A673 (cell line): ENCODE measurements at regions of chr1 and their contacts with region 1.

Region 1: DNA sequence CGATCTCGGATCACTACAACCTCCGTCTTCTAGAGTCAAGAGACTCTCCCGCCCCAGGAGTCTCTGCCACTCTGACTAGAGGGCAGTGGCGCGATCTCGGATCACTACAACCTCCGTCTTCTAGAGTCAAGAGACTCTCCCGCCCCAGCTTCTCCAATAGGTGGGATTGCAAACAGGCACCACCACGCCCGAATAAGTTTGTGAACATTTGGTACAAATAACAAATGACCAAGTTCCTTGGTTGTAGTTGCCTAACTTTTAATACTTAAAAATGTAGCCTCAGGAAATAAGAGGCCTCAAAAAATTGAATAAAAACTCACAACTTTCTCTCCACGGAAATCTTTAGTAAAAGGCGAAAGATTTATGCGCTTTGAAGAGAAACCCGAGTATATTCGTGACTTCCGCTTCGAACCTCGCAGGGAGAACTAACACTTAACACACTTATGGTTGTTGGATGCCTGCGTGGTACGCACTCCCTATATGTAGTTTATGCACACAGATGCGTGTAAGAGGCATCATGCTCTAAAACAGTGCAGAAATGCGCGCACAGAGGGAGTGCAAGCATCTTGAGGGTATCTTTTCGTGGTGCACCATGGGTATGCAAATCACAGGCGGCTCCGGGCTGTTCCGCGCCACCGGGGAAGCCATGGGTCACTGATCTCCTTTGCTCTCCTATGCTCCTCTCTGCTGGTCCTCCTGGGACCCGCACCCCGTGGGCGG is 11.4 kb downstream of the BTBD19 start:
- DNase-seq: peak; percentile 98
- H3K4me3 ChIP-seq: peak overlapping the region; percentile 48
- H3K27ac ChIP-seq: peak overlapping the region; percentile 98
- H3K4me1 ChIP-seq: peaks cover 6% of the 10 kb centered on the region
- H3K27me3 ChIP-seq: no peaks in the 10 kb centered on the region
- CTCF ChIP-seq: 0 out of 2 replicates have a peak, but pooled peaks have one; percentile 15

Region 2: DNA sequence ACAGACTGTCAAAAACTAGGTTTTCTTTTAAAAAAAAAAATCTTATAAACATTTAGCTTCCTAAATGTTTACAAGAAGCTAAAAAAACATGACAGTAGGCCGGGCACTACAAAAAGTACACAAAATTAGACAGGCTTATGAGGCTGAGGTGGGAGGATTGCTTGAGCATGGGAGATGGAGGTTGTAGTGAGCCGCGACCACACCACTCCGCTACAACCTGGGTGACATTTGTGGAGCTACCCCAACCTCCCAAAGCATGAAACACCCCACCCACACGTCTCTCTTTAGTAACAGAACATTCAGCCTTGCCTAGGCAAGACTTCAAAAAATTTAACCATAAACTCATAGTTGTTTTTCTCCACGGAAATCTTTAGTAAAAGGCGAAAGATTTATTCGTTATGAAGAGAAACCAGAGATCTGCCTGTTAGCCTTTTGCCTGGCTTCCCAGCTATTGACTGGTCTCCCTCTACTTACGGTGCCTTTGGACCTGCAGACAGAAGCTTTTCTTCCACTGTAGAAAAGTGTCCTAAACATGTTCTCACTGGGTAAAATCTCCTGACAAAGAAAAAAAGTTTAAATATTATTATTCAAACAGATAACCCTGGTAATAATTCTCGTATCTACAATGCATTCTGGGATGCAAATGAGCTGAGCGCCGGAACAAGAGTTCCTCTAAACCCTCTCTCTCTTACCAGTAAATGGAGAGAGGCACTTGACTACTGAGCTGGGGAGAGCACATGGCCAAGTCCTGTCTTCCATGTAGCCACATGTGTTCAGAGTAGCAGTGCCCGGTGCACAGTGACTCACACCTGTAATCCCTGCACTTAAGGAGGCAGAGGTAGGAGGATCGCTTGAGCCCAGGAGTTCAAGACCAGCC is 98.0 kb before region 1 on chr1:
- CTCF ChIA-PET with region 1: no interaction called
- POLR2A ChIA-PET with region 1: interaction called, 18 read pairs
- intact Hi-C with region 1: no loop called
- DNase-seq: peak; percentile 98
- H3K4me3 ChIP-seq: no peak overlapping the region
- H3K27ac ChIP-seq: peak overlapping the region; percentile 95
- H3K4me1 ChIP-seq: peaks cover 3% of the 10 kb centered on the region
- H3K27me3 ChIP-seq: no peaks in the 10 kb centered on the region
- CTCF ChIP-seq: no peak; the same call in 1 of the 2 replicates

Region 3: DNA sequence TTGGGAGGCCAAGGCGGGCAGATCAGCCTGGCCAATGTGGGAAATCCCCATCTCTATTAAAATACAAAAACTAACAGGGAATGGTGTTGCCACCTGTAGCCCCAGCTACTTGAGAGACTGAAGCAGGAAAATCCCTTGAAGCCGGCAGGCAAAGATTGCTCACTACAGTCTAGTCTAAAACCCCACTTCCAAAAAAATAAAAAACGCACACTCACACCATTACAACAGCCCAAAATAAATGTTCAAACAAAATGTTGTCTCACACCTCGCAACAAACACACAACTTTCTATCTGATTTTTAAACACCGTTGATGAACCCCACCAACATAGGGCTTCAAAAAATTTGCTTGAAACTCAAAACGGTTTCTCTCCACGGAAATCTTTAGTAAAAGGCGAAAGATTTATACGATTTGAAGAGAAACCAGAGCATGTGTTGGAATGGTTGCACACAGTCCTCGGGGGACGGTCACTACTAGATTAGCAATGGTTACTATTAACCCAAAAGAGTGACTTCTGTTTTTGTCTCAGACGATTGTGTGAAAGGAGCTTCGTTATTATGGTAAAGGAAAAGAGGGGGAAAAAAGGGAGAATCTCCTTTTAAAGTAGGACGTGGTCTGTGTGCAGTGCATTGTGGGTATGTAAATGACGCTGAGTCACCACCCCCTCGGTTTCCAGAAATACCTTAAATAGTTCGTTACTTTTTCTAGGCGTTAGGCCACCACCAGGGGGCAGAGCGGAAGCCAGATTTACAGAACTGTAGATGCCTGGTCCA is 88.8 kb before region 1 on chr1 and contains the start of gene RNU5D-1:
- CTCF ChIA-PET with region 1: no interaction called
- POLR2A ChIA-PET with region 1: interaction called, 16 read pairs
- intact Hi-C with region 1: loop called (anchors 2 kb)
- DNase-seq: peak; percentile 98
- H3K4me3 ChIP-seq: no peak within 1 kb of the TSS
- H3K27ac ChIP-seq: peak within 1 kb of the TSS; percentile 99
- H3K4me1 ChIP-seq: peaks cover 4% of the 10 kb centered on the region
- H3K27me3 ChIP-seq: no peaks in the 10 kb centered on the region
- CTCF ChIP-seq: peak; percentile 90
- total RNA-seq, gene RNU5D-1: not detected in 2 replicates

Region 4: DNA sequence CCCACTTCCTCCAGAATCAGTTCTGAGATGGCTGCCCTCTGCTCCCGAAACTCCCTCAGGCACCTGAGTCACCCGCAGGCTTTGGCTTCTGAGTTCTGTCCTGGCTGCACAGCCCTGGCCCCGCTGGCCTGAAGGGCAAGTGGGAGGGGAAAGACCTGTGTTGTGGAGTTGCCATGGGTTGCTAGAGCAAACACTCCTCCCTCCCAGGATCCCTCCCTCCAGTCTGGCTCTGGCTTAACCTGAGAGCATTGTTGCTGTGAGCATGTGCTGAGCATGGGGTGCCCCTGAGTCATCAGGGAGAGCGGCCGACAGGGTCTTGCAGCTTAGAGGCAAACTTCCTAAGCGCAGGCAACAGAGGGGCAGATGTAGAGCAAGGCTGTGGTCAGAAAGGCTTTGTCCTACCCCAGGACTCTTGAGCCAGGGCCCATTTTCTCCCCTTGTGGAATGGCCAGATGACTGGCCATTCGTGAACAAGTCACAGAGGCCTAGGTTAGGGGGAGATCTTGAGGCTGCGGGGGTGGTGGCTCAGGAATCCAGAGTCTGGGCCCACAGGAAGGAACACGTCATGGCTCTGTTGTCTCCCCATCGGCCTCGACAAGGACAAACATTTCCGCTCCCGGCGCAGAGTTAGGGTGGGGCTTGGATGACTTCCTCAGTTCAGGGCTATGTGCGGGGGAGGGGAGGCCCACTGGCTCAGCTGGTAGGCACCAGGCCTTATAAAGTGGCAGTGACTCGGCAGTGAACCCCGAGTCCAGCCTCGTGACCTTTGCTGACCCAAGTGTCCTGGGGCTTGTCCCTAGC is 12.3 kb before region 1 on chr1 and contains the start of gene DYNLT4:
- CTCF ChIA-PET with region 1: interaction called, 3 read pairs
- POLR2A ChIA-PET with region 1: interaction called, 18 read pairs
- intact Hi-C with region 1: no loop called
- DNase-seq: peak; percentile 97
- H3K4me3 ChIP-seq: peak within 1 kb of the TSS; percentile 41
- H3K27ac ChIP-seq: peak within 1 kb of the TSS; percentile 98
- H3K4me1 ChIP-seq: peaks cover 55% of the 10 kb centered on the region
- H3K27me3 ChIP-seq: no peaks in the 10 kb centered on the region
- CTCF ChIP-seq: no peak
- total RNA-seq, gene DYNLT4: 0.44 and 0.54 TPM in 2 replicates